MCF 10A (cell line): ENCODE measurements at regions of chr14 and their contacts with region 1.

Region 1: DNA sequence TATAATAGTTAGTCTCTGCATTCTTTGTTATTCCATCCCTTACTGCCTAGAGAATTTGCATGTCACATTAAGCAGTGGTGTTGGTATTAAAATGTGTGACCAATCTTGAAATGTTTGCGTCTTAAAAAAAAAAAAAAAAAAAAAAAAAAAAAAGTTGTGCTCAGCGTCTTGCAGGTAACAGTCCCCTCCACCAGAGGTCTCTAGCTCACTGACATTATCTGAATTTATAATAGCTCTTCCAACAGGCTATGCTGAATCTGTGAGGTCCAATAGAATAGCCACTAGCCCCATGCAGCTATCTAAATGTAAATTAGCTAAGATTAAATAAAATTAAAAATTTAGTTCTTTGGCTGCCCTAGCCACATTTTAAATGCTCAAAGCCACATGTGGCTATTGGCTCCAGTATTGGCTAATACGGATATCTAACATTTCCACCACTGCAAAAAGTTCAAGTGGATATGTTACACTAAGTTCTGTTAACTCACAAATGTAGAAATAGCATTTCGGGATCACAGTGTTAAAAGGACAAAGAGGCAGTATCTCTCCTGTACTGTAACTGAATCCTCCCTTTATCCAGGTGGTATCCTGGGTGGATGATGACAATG is 28.7 kb downstream of the NKX2-8 start:
- DNase-seq: peak; percentile 61
- H3K4me3 Mint-ChIP-seq: no peak overlapping the region
- H3K27ac Mint-ChIP-seq: no peak overlapping the region
- H3K4me1 Mint-ChIP-seq: peaks cover 5% of the 10 kb centered on the region
- H3K27me3 Mint-ChIP-seq: no peaks in the 10 kb centered on the region
- CTCF ChIP-seq: peak; percentile 56

Region 2: GRCh38 chr14:35883677-35884293 is 670.0 kb before region 1 on chr14:
- CTCF ChIA-PET with region 1: interaction called, 21 read pairs
- POLR2A ChIA-PET with region 1: no interaction called
- intact Hi-C with region 1: loop called (anchors 2 kb)
- DNase-seq: peak; percentile 41
- H3K4me3 Mint-ChIP-seq: no peak overlapping the region
- H3K27ac Mint-ChIP-seq: no peak overlapping the region
- H3K4me1 Mint-ChIP-seq: peaks cover 14% of the 10 kb centered on the region
- H3K27me3 Mint-ChIP-seq: no peaks in the 10 kb centered on the region
- CTCF ChIP-seq: peak; percentile 66

Region 3: DNA sequence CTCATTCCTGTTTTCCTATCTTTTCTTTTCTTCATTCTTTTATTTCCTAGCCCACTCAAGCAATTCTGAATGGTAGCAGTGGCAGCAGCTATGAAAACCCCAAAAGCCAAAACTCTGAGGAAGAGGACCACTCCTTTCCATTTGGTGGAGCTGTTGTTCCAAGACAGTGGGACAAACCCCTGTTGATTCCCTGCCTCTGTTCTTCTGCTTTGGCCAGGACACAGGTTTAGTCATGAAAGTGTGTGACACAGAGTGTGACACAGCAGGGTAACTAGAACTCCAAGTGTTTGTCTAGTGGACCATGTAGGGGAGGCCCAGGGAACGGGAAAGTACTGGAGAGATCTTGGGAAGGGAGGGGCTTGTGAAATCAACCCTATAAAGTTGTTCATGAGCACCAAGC is 448.4 kb before region 1 on chr14:
- CTCF ChIA-PET with region 1: no interaction called
- POLR2A ChIA-PET with region 1: no interaction called
- intact Hi-C with region 1: loop called (anchors 1 kb)
- DNase-seq: peak; percentile 58
- H3K4me3 Mint-ChIP-seq: no peak overlapping the region
- H3K27ac Mint-ChIP-seq: no peak overlapping the region
- H3K4me1 Mint-ChIP-seq: no peaks in the 10 kb centered on the region
- H3K27me3 Mint-ChIP-seq: peaks cover 2% of the 10 kb centered on the region
- CTCF ChIP-seq: no peak

Region 4: GRCh38 chr14:36268121-36268520 is 285.6 kb before region 1 on chr14:
- CTCF ChIA-PET with region 1: no interaction called
- POLR2A ChIA-PET with region 1: no interaction called
- intact Hi-C with region 1: no loop called
- DNase-seq: no peak
- H3K4me3 Mint-ChIP-seq: no peak overlapping the region
- H3K27ac Mint-ChIP-seq: no peak overlapping the region
- H3K4me1 Mint-ChIP-seq: peaks cover 5% of the 10 kb centered on the region
- H3K27me3 Mint-ChIP-seq: no peaks in the 10 kb centered on the region
- CTCF ChIP-seq: no peak

Region 5: GRCh38 chr14:36430662-36431084 is 123.1 kb before region 1 on chr14:
- CTCF ChIA-PET with region 1: no interaction called
- POLR2A ChIA-PET with region 1: no interaction called
- intact Hi-C with region 1: no loop called
- DNase-seq: peak; percentile 13
- H3K4me3 Mint-ChIP-seq: no peak overlapping the region
- H3K27ac Mint-ChIP-seq: no peak overlapping the region
- H3K4me1 Mint-ChIP-seq: no peaks in the 10 kb centered on the region
- H3K27me3 Mint-ChIP-seq: no peaks in the 10 kb centered on the region
- CTCF ChIP-seq: no peak

Region 6: DNA sequence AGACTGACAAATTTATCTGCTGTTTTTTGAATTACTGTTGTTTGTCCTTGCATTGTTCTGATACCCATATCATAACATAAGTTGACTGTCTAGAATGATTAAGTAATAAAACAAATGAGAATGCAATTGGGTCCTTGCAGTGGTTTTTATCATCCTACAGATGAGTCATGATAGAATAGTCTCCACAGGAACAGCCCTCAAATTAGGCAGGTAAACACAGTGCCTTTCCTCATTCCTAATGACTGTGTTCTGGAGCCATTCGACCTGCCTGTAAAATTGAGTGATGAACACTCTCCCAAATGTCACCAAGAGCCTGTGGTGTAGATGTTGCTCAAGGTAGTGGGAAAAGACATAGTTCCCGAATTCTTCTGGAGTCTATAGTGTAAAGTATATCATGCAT is 16.3 kb after region 1 on chr14:
- CTCF ChIA-PET with region 1: interaction called, 14 read pairs
- POLR2A ChIA-PET with region 1: interaction called, 3 read pairs
- intact Hi-C with region 1: no loop called
- DNase-seq: peak; percentile 24
- H3K4me3 Mint-ChIP-seq: no peak overlapping the region
- H3K27ac Mint-ChIP-seq: no peak overlapping the region
- H3K4me1 Mint-ChIP-seq: peaks cover 7% of the 10 kb centered on the region
- H3K27me3 Mint-ChIP-seq: no peaks in the 10 kb centered on the region
- CTCF ChIP-seq: no peak

Region 7: GRCh38 chr14:36597775-36598174 is 44.0 kb after region 1 on chr14:
- CTCF ChIA-PET with region 1: interaction called, 157 read pairs
- POLR2A ChIA-PET with region 1: interaction called, 5 read pairs
- intact Hi-C with region 1: no loop called
- DNase-seq: no peak
- H3K4me3 Mint-ChIP-seq: no peak overlapping the region
- H3K27ac Mint-ChIP-seq: no peak overlapping the region
- H3K4me1 Mint-ChIP-seq: peaks cover 5% of the 10 kb centered on the region
- H3K27me3 Mint-ChIP-seq: no peaks in the 10 kb centered on the region
- CTCF ChIP-seq: no peak

Region 8: DNA sequence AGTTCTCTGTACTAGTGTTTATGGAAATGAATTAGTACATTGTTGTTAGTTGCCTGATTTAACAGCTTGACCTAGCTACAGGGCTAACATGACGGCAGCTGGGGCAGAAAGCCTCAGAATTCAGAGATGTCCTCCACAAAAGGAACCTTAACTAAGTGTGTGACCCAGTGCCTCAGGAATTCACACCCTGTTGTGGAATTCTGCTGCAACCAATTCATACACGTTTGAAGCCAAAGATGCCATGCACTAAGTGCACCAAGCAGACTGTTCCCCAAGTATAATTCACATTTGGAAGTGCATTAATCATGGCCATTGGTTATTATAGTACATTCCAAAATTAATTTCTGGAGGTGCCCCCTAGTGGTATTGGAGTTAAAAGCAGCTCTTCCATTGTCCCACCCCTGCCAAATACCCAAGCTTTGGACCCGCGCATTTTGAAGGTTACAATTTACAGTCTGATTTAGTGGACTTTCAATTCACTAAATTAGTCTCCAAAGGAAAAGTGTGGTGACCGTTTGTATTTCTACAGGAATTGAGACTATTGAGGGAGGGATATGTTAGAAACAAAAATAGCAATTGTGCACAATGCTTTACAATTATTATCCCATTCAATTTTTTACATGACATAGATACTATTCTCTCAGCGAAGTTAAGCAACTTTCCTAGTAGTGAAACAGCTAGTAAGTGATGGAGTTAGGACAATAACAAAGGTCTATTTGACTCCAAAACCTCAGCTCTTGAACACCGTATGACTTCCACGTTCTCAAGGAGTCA is 193.8 kb after region 1 on chr14:
- CTCF ChIA-PET with region 1: interaction called, 3 read pairs
- POLR2A ChIA-PET with region 1: no interaction called
- intact Hi-C with region 1: loop called (anchors 2 kb)
- DNase-seq: peak; percentile 43
- H3K4me3 Mint-ChIP-seq: no peak overlapping the region
- H3K27ac Mint-ChIP-seq: no peak overlapping the region
- H3K4me1 Mint-ChIP-seq: no peaks in the 10 kb centered on the region
- H3K27me3 Mint-ChIP-seq: no peaks in the 10 kb centered on the region
- CTCF ChIP-seq: peak; percentile 51

Region 9: DNA sequence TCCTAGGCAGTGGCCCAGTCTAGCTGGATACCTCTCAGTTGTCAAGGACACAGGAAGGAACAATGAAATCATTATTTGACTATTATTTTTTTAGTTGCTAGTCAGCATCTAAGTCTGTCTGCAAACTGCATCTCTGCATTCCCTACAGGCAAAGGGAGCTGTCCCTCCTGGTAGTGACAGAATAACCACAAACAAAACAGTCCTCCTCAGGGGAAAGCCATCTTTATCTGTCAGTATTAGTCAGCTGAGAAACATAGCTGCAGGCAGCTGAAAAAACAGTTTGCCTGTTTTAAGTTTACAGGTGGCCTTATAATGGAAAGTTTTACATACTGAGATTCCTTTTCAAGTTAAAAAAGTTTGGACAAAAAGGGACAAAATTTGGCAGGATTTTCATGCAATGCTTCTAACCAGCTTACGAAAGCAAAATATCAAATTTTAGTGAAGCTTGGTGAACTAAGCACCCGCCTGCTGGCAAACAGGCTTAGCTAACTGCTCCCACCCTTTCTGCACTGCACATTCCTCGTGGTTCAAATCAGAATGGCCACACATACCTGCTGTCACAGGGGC is 589.2 kb after region 1 on chr14:
- CTCF ChIA-PET with region 1: interaction called, 117 read pairs
- POLR2A ChIA-PET with region 1: no interaction called
- intact Hi-C with region 1: no loop called
- DNase-seq: peak; percentile 51
- H3K4me3 Mint-ChIP-seq: no peak overlapping the region
- H3K27ac Mint-ChIP-seq: peak overlapping the region; percentile 47
- H3K4me1 Mint-ChIP-seq: peaks cover 19% of the 10 kb centered on the region
- H3K27me3 Mint-ChIP-seq: no peaks in the 10 kb centered on the region
- CTCF ChIP-seq: no peak